ENCODE measurements at regions of chr4 and their contacts with region 1.

Region 1: DNA sequence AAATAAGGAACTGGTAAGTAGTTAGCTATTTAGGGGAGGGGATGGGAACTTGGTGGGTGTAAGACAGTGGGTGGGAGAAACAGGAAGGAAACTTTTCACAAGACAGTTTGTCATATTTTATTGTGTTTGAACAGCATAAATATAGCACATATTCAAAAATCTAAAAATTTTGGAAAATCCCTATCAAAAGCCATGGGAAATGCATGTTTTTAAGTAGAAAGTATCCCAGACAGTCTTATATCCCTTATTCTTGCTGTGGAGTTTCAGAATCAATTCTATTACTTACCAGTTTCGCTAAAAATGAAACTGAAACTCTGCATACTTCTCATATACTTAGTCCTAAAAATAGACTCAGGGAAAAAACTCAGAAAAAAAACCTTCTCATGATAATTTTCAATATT is 22.3 kb upstream of the RASGEF1B start:
- DNase-seq: peak in 4 of 9 donors; percentile 29 to 46 (median 38)
- ATAC-seq: peak; percentile 33
- H3K4me3 ChIP-seq: peak overlapping the region; percentile 47
- H3K4me3 Mint-ChIP-seq: peak overlapping the region; percentile 47 to 82 (median 76)
- H3K27ac ChIP-seq: peak overlapping the region; percentile 66
- H3K27ac Mint-ChIP-seq: peak overlapping the region; percentile 76 to 99 (median 94)
- H3K4me1 ChIP-seq: peaks cover 27 to 39% of the 10 kb centered on the region in 2 donors
- H3K4me1 Mint-ChIP-seq: peaks cover 27 to 62% (median 49%) of the 10 kb centered on the region in 7 donors
- H3K27me3 ChIP-seq: no peaks in the 10 kb centered on the region
- H3K27me3 Mint-ChIP-seq: peaks cover 0 to 8% (median 0%) of the 10 kb centered on the region in 5 donors

Region 2: GRCh38 chr4:79780811-79781210 is 1713.2 kb before region 1 on chr4:
- CTCF ChIA-PET with region 1: no interaction called
- POLR2A ChIA-PET with region 1: no interaction called
- intact Hi-C with region 1: no loop called
- DNase-seq: no peak
- ATAC-seq: no peak
- H3K4me3 ChIP-seq: no peak overlapping the region
- H3K4me3 Mint-ChIP-seq: no peak overlapping the region
- H3K27ac ChIP-seq: no peak overlapping the region
- H3K27ac Mint-ChIP-seq: no peak overlapping the region
- H3K4me1 ChIP-seq: no peaks in the 10 kb centered on the region
- H3K4me1 Mint-ChIP-seq: no peaks in the 10 kb centered on the region
- H3K27me3 ChIP-seq: no peaks in the 10 kb centered on the region
- H3K27me3 Mint-ChIP-seq: peaks cover 0 to 4% (median 0%) of the 10 kb centered on the region in 5 donors

Region 3: DNA sequence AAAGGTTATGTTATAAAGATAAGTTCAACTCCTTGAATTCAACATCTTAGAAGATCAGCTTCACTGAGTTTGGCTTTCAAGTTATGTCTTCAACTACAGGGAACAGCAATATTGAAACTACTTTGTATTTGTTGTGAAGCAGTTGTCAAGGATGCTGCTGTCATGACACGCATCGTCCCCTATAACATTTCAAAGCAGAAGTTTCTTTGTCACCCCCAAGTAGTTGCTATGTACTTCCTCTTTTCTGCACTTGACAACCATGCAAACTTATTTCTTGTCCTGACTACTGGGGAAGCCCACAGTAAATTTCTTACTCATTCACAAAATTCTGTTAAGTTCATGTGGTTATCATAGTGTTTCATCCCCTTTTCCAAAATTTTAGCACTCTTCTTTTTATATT is 1435.3 kb before region 1 on chr4:
- CTCF ChIA-PET with region 1: no interaction called
- POLR2A ChIA-PET with region 1: no interaction called
- intact Hi-C with region 1: loop called in 1 of 2 experiments (anchors 5 kb)
- DNase-seq: peak in 7 of 9 donors; percentile 53 to 89 (median 84)
- ATAC-seq: peak; percentile 96
- H3K4me3 ChIP-seq: no peak overlapping the region
- H3K4me3 Mint-ChIP-seq: peak overlapping the region; percentile 54 to 86 (median 74)
- H3K27ac ChIP-seq: peak overlapping the region; percentile 86
- H3K27ac Mint-ChIP-seq: peak overlapping the region; percentile 91 to 99 (median 96)
- H3K4me1 ChIP-seq: peaks cover 10 to 13% of the 10 kb centered on the region in 2 donors
- H3K4me1 Mint-ChIP-seq: peaks cover 12 to 50% (median 42%) of the 10 kb centered on the region in 7 donors
- H3K27me3 ChIP-seq: no peaks in the 10 kb centered on the region
- H3K27me3 Mint-ChIP-seq: no peaks in the 10 kb centered on the region

Region 4: DNA sequence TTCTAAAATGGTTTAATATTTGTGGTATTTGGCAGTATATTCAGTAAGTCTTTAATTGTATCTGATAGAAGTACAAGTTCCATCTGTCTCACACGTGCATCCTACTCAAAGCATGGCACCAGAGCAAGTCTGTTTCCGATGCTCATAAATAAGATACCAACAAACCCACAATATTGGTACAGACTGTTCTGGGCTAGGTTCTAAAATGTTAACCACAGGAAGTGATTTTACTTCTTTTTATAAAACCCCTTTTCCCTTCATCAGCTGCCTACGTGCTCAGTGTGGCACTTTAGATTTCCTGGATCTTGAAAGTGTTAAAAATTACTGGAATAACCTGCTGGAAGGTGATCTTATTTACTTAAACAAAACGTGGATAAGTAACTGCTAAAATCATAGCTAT is 993.4 kb before region 1 on chr4:
- CTCF ChIA-PET with region 1: no interaction called
- POLR2A ChIA-PET with region 1: no interaction called
- intact Hi-C with region 1: loop called in 1 of 2 experiments (anchors 5 kb)
- DNase-seq: peak in 7 of 9 donors; percentile 24 to 81 (median 71)
- ATAC-seq: peak; percentile 96
- H3K4me3 ChIP-seq: peak overlapping the region; percentile 1
- H3K4me3 Mint-ChIP-seq: peak overlapping the region in 8 of 10 donors; percentile 1 to 67 (median 54)
- H3K27ac ChIP-seq: no peak overlapping the region
- H3K27ac Mint-ChIP-seq: peak overlapping the region in 8 of 9 donors; percentile 60 to 88 (median 81)
- H3K4me1 ChIP-seq: peaks cover 23 to 42% of the 10 kb centered on the region in 2 donors
- H3K4me1 Mint-ChIP-seq: peaks cover 9 to 81% (median 71%) of the 10 kb centered on the region in 7 donors
- H3K27me3 ChIP-seq: no peaks in the 10 kb centered on the region
- H3K27me3 Mint-ChIP-seq: peaks cover 0 to 3% (median 0%) of the 10 kb centered on the region in 5 donors

Region 5: GRCh38 chr4:81405894-81406401 is 88.1 kb before region 1 on chr4:
- CTCF ChIA-PET with region 1: no interaction called
- POLR2A ChIA-PET with region 1: no interaction called
- intact Hi-C with region 1: no loop called
- DNase-seq: peak in 7 of 9 donors; percentile 54 to 80 (median 70)
- ATAC-seq: peak; percentile 88
- H3K4me3 ChIP-seq: no peak overlapping the region
- H3K4me3 Mint-ChIP-seq: peak overlapping the region in 4 of 10 donors; percentile 8 to 56 (median 20)
- H3K27ac ChIP-seq: no peak overlapping the region
- H3K27ac Mint-ChIP-seq: no peak overlapping the region
- H3K4me1 ChIP-seq: no peaks in the 10 kb centered on the region
- H3K4me1 Mint-ChIP-seq: peaks cover 0 to 9% (median 4%) of the 10 kb centered on the region in 7 donors
- H3K27me3 ChIP-seq: no peaks in the 10 kb centered on the region
- H3K27me3 Mint-ChIP-seq: peaks cover 0 to 8% (median 0%) of the 10 kb centered on the region in 5 donors

Region 6: GRCh38 chr4:81562093-81562492 is 68.1 kb after region 1 on chr4:
- CTCF ChIA-PET with region 1: no interaction called
- POLR2A ChIA-PET with region 1: interaction called, 4 read pairs
- intact Hi-C with region 1: loop called (anchors 1 kb)
- DNase-seq: peak in 7 of 9 donors; percentile 28 to 50 (median 40)
- ATAC-seq: peak; percentile 94
- H3K4me3 ChIP-seq: no peak overlapping the region
- H3K4me3 Mint-ChIP-seq: peak overlapping the region in 7 of 10 donors; percentile 27 to 64 (median 55)
- H3K27ac ChIP-seq: peak overlapping the region; percentile 42
- H3K27ac Mint-ChIP-seq: peak overlapping the region; percentile 5 to 86 (median 77)
- H3K4me1 ChIP-seq: peaks cover 0 to 5% of the 10 kb centered on the region in 2 donors
- H3K4me1 Mint-ChIP-seq: peaks cover 7 to 14% (median 13%) of the 10 kb centered on the region in 7 donors
- H3K27me3 ChIP-seq: no peaks in the 10 kb centered on the region
- H3K27me3 Mint-ChIP-seq: no peaks in the 10 kb centered on the region

Region 7: DNA sequence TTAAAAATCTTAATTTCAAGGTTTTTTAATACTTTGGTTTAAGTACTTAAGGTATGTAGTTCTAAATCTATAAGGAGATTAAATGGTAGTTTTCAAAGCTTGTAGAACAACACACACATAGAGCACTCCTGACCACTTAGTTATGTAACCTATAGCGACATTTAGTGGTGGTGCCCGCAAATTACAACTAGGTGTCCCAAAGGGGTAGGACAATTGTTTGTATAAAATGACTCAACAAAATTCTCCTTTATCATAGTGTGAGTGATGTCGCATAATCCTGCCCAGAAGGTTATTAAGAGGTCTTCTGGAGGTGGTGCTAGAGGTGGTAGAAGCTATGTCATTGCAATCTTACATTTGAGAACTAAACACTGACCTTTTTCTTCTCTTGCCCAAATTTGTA is 350.7 kb after region 1 on chr4:
- CTCF ChIA-PET with region 1: no interaction called
- POLR2A ChIA-PET with region 1: no interaction called
- intact Hi-C with region 1: loop called in 1 of 2 experiments (anchors 1 kb)
- DNase-seq: peak; percentile 9 to 75 (median 62)
- ATAC-seq: peak; percentile 96
- H3K4me3 ChIP-seq: no peak overlapping the region
- H3K4me3 Mint-ChIP-seq: no peak overlapping the region
- H3K27ac ChIP-seq: no peak overlapping the region
- H3K27ac Mint-ChIP-seq: no peak overlapping the region
- H3K4me1 ChIP-seq: no peaks in the 10 kb centered on the region
- H3K4me1 Mint-ChIP-seq: no peaks in the 10 kb centered on the region
- H3K27me3 ChIP-seq: no peaks in the 10 kb centered on the region
- H3K27me3 Mint-ChIP-seq: peaks cover 0 to 3% (median 0%) of the 10 kb centered on the region in 5 donors

Region 8: GRCh38 chr4:81860111-81860510 is 366.1 kb after region 1 on chr4:
- CTCF ChIA-PET with region 1: no interaction called
- POLR2A ChIA-PET with region 1: no interaction called
- intact Hi-C with region 1: no loop called
- DNase-seq: no peak
- ATAC-seq: no peak
- H3K4me3 ChIP-seq: no peak overlapping the region
- H3K4me3 Mint-ChIP-seq: no peak overlapping the region
- H3K27ac ChIP-seq: no peak overlapping the region
- H3K27ac Mint-ChIP-seq: no peak overlapping the region
- H3K4me1 ChIP-seq: no peaks in the 10 kb centered on the region
- H3K4me1 Mint-ChIP-seq: no peaks in the 10 kb centered on the region
- H3K27me3 ChIP-seq: no peaks in the 10 kb centered on the region
- H3K27me3 Mint-ChIP-seq: peaks cover 4 to 8% (median 6%) of the 10 kb centered on the region in 5 donors

Region 9: DNA sequence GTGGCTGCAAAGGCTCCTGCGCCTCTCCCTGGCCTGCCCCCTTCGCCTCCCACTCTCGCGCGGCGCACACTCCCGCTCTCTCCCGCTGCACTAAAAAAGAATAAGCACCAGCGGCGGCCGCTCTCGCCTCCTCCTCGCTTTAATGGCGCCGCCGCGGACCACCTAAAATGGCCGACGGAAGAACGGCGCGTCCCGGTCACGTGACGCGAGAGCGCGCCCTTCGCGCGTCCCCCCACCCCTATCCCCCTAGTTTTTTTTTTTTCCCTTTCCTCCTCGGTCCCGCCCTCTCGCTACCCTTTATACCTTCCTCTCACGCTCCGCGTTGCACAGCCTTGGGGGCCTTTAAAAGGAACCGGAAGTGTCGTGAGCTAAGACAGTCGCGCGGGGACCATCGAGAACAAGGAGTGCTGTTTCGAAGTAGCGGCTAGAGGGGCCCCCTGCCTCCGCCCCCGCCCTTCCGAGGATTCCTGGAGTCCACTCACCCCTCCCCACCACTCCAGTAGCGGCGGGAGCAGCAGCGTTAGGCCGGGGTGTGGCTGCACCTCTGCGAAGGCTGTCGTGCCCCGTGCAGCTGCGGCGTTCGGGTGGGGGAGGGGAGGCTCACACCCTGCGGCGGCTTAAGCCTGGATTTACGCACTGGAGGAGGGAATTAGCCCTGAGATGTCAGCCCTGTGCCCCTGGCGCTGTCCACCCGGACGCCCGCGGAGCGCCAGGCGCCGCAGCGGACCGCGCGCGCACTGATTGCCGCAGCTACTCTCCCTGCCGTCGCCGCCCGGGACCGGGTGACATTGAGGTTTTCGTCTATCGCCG is 880.0 kb after region 1 on chr4 and contains the start of gene HNRNPD:
- CTCF ChIA-PET with region 1: no interaction called
- POLR2A ChIA-PET with region 1: no interaction called
- intact Hi-C with region 1: loop called (anchors 5 kb)
- DNase-seq: peak; percentile 79 to 96 (median 93)
- ATAC-seq: peak; percentile 93
- H3K4me3 ChIP-seq: peak within 1 kb of the TSS; percentile 94
- H3K4me3 Mint-ChIP-seq: peak within 1 kb of the TSS; percentile 91 to 100 (median 97)
- H3K27ac ChIP-seq: peak within 1 kb of the TSS; percentile 98
- H3K27ac Mint-ChIP-seq: peak within 1 kb of the TSS; percentile 95 to 100 (median 99)
- H3K4me1 ChIP-seq: peaks cover 28 to 31% of the 10 kb centered on the region in 2 donors
- H3K4me1 Mint-ChIP-seq: peaks cover 35 to 62% (median 54%) of the 10 kb centered on the region in 7 donors
- H3K27me3 ChIP-seq: no peaks in the 10 kb centered on the region
- H3K27me3 Mint-ChIP-seq: peaks cover 0 to 3% (median 0%) of the 10 kb centered on the region in 5 donors
- total RNA-seq, gene HNRNPD: 200 to 355 (median 238) TPM

Region 10: GRCh38 chr4:82833696-82834313 is 1339.8 kb after region 1 on chr4:
- CTCF ChIA-PET with region 1: no interaction called
- POLR2A ChIA-PET with region 1: no interaction called
- intact Hi-C with region 1: no loop called
- DNase-seq: no peak
- ATAC-seq: no peak
- H3K4me3 ChIP-seq: no peak overlapping the region
- H3K4me3 Mint-ChIP-seq: no peak overlapping the region
- H3K27ac ChIP-seq: no peak overlapping the region
- H3K27ac Mint-ChIP-seq: no peak overlapping the region
- H3K4me1 ChIP-seq: no peaks in the 10 kb centered on the region
- H3K4me1 Mint-ChIP-seq: peaks cover 0 to 6% (median 0%) of the 10 kb centered on the region in 7 donors
- H3K27me3 ChIP-seq: no peaks in the 10 kb centered on the region
- H3K27me3 Mint-ChIP-seq: no peaks in the 10 kb centered on the region

Region 11: DNA sequence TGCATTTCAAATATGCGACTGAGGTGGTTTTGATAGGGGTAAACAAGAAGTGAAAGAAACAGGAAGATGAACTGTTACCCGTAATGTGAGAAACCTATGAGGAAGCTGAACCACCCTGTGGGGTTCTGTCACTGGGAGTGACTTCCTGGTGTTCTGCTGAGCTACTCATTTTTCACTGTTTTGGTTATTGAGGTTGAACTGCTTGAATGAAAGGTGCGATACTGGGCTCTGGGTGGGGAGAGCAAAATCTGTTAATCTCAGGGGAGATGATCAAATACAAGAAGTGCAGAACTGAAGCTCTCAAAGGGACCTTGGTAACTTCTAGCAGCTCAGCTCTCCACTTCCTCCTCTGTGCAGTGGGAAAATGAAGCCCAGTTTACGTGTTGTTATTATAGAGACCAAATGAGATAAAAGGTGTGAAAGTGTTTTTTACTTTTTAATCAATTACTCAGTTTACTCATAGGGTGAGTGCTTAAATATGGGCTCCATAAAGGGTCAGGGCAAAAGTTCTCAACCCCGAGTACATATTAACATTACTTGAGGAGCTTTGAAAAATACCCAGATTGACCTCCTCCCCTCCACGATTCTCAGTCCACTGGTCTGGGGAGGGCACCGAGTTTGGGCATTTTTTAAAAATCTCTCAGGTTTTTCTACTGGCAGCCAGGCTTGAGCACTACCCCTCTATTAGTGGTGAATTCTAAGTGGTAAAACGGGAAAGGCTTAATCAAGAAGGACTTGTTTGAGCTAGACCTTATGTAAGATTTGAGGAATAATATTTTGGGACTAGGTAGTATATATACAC is 1723.9 kb after region 1 on chr4:
- CTCF ChIA-PET with region 1: no interaction called
- POLR2A ChIA-PET with region 1: no interaction called
- intact Hi-C with region 1: loop called in 1 of 2 experiments (anchors 10 kb)
- DNase-seq: peak in 8 of 9 donors; percentile 52 to 91 (median 84)
- ATAC-seq: peak; percentile 95
- H3K4me3 ChIP-seq: peak overlapping the region; percentile 23
- H3K4me3 Mint-ChIP-seq: peak overlapping the region; percentile 57 to 84 (median 72)
- H3K27ac ChIP-seq: peak overlapping the region; percentile 78
- H3K27ac Mint-ChIP-seq: peak overlapping the region; percentile 88 to 96 (median 92)
- H3K4me1 ChIP-seq: peaks cover 65 to 77% of the 10 kb centered on the region in 2 donors
- H3K4me1 Mint-ChIP-seq: peaks cover 56 to 83% (median 74%) of the 10 kb centered on the region in 7 donors
- H3K27me3 ChIP-seq: no peaks in the 10 kb centered on the region
- H3K27me3 Mint-ChIP-seq: no peaks in the 10 kb centered on the region

Measured in naive thymus-derived CD4-positive, alpha-beta T cell (primary cell).